Psoas muscle (tissue), 8 donors: ENCODE measurements at regions of chr1 and their contacts with region 1.

Region 1: DNA sequence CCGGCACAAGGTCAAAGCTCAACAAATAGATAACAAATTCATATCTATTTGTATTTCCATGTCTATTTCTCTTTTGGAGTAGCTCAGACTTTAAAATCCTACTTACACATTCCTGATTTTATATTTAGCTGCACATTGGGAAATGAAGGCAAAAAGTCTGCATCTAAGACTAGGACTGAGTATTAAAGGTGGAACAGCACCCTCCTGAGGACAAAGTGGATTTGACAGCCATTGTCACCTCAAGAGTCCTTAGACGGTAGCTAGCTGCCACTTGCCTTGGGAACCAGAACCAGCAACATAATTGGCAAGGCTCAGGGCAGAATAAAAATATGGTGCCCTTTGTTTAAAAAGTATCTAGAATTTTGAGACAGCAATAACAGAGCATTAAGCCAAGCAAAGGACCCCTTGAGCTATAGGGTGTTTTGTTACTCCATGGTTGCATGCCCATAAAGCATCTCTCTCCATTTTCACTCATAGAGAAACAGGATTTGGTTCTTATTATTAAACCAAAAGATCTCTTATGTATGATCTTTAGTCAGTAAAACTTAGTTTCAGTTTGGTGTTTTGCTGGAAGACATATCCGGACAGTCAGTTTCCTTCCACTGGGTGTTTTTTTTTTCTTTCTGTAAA is 30.0 kb upstream of the SGIP1 start:
- DNase-seq: no peak
- ATAC-seq: peak in 2 of 4 donors; percentile 54 to 59
- H3K4me3 ChIP-seq: no peak overlapping the region
- H3K27ac ChIP-seq: no peak overlapping the region
- H3K4me1 ChIP-seq: no peaks in the 10 kb centered on the region
- H3K27me3 ChIP-seq: no peaks in the 10 kb centered on the region
- CTCF ChIP-seq: peak; percentile 53

Region 2: GRCh38 chr1:66253330-66253921 is 250.5 kb before region 1 on chr1:
- intact Hi-C with region 1: loop called in 1 of 2 experiments (anchors 5 kb)
- DNase-seq: no peak
- ATAC-seq: peak; percentile 90 to 95 (median 94)
- H3K4me3 ChIP-seq: no peak overlapping the region
- H3K27ac ChIP-seq: no peak overlapping the region
- H3K4me1 ChIP-seq: peaks cover 19% of the 10 kb centered on the region
- H3K27me3 ChIP-seq: no peaks in the 10 kb centered on the region
- CTCF ChIP-seq: peak; percentile 87

Region 3: GRCh38 chr1:66521721-66522365 is 17.9 kb after region 1 on chr1:
- intact Hi-C with region 1: no loop called
- DNase-seq: no peak
- ATAC-seq: no peak
- H3K4me3 ChIP-seq: no peak overlapping the region
- H3K27ac ChIP-seq: no peak overlapping the region
- H3K4me1 ChIP-seq: no peaks in the 10 kb centered on the region
- H3K27me3 ChIP-seq: no peaks in the 10 kb centered on the region
- CTCF ChIP-seq: no peak